Breast epithelium (tissue), 4 donors: ENCODE measurements at regions of chr1 and their contacts with region 1.

Region 1: GRCh38 chr1:217673387-217673786 is 42.2 kb downstream of the SPATA17 start:
- DNase-seq: no peak
- H3K4me3 ChIP-seq: no peak overlapping the region
- H3K27ac ChIP-seq: no peak overlapping the region
- H3K4me1 ChIP-seq: no peaks in the 10 kb centered on the region
- H3K27me3 ChIP-seq: no peaks in the 10 kb centered on the region
- CTCF ChIP-seq: no peak
- POLR2A ChIP-seq: no peak

Region 2: DNA sequence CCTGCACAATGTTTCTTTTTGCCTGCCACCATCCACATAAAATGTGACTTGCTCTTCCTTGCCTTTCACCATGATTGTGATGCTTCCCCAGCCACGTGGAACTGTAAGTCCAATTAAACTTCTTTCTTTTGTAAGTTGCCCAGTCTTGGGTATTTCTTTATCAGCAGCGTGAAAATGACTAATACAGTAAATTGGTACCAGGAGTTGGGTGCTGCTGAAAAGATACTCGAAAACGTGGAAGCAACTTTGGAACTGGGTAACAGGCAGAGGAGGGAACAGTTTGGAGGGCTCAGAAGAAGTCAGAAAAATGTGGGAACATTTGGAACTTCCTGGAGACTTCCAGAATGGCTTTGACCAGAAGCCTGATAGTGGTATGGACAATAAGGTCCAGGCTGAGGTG is 467.8 kb before region 1 on chr1:
- intact Hi-C with region 1: loop called (anchors 5 kb)
- DNase-seq: no peak
- H3K4me3 ChIP-seq: no peak overlapping the region
- H3K27ac ChIP-seq: no peak overlapping the region
- H3K4me1 ChIP-seq: no peaks in the 10 kb centered on the region
- H3K27me3 ChIP-seq: no peaks in the 10 kb centered on the region
- CTCF ChIP-seq: no peak
- POLR2A ChIP-seq: no peak